Activated CD8-positive, alpha-beta T cell treated with anti-CD3 and anti-CD28 coated beads, Interleukin-2, amount 10 ng/mL, durations not matched to agents 7 days and 5 days (primary cell): ENCODE measurements at regions of chr1 and their contacts with region 1.

Region 1: DNA sequence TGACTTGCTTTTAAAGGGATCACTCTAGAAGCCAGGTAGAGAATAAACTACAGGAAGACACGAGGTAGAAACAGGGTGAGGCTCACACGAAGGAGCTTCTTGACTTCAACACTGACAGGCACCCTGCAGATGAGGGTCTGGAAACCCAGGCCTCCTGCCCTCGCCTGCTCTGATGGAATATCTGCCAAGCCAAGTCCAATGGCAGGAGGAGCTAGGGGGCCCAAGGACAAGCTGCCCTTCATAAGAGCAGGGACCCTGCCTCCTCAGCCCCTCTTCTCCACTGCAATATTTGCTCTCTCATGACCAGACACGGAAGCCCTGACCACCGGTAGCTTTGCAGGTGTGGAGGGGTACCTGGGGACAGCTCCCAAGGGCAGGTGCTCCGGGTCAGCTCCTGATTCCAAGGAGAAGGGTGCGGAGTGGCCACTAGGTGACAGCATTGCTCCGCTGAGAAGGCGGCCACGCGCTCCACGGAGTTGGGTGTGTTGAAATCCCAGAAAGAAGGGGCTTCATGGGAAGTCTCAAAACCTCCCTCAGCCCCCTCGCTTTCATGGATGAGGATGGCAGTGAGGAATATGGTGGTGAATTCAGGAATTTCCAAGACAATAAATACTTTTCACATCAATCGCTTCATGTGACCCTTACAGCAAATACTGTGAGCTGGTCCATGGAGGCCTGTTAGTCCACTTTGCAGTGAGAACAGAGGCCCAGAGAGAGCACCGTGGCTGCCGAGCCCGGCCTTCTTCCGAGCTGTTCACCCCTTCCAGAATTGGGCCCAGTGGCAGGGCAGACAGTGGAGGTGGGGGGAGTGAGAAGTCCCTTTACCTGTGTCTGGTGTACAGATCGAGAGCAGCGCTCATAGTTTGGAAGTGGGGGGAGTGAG is 33.2 kb upstream of the PAX7 start:
- DNase-seq: peak; percentile 58
- ATAC-seq: peak; percentile 65
- H3K4me3 Mint-ChIP-seq: no peak overlapping the region
- H3K27ac Mint-ChIP-seq: no peak overlapping the region
- H3K4me1 Mint-ChIP-seq: no peaks in the 10 kb centered on the region
- H3K27me3 Mint-ChIP-seq: peaks cover 17% of the 10 kb centered on the region

Region 2: GRCh38 chr1:18556364-18556763 is 41.0 kb before region 1 on chr1:
- CTCF ChIA-PET with region 1: no interaction called
- POLR2A ChIA-PET with region 1: no interaction called
- DNase-seq: no peak
- ATAC-seq: no peak
- H3K4me3 Mint-ChIP-seq: no peak overlapping the region
- H3K27ac Mint-ChIP-seq: no peak overlapping the region
- H3K4me1 Mint-ChIP-seq: peaks cover 7% of the 10 kb centered on the region
- H3K27me3 Mint-ChIP-seq: peaks cover 27% of the 10 kb centered on the region

Region 3: GRCh38 chr1:18581420-18581880 is 16.0 kb before region 1 on chr1:
- CTCF ChIA-PET with region 1: interaction called, 11 read pairs
- POLR2A ChIA-PET with region 1: no interaction called
- DNase-seq: peak; percentile 58
- ATAC-seq: peak; percentile 61
- H3K4me3 Mint-ChIP-seq: no peak overlapping the region
- H3K27ac Mint-ChIP-seq: no peak overlapping the region
- H3K4me1 Mint-ChIP-seq: no peaks in the 10 kb centered on the region
- H3K27me3 Mint-ChIP-seq: peaks cover 2% of the 10 kb centered on the region

Region 4: DNA sequence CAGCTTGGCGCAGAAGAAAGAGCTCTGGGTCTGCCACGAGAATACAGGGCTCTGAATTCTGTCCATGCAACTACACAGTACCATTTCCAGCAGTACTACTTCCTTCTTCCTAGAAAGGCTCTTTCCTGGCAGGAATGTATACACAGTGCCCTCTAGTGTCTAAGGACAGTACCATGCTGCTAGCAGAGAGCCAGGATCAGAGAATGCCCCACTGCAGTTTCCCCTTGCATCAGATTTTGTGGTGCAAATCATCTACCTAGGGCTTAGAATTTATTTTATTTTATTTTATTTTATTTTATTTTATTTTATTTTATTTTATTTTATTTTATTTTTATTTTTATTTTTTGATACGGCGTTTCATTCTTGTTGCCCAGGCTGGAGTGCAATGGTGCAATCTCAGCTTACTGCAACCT is 84.0 kb after region 1 on chr1:
- CTCF ChIA-PET with region 1: interaction called, 10 read pairs
- POLR2A ChIA-PET with region 1: no interaction called
- DNase-seq: peak; percentile 31
- ATAC-seq: no peak
- H3K4me3 Mint-ChIP-seq: no peak overlapping the region
- H3K27ac Mint-ChIP-seq: no peak overlapping the region
- H3K4me1 Mint-ChIP-seq: no peaks in the 10 kb centered on the region
- H3K27me3 Mint-ChIP-seq: peaks cover 2% of the 10 kb centered on the region

Region 5: GRCh38 chr1:18686540-18686939 is 89.1 kb after region 1 on chr1:
- CTCF ChIA-PET with region 1: interaction called, 10 read pairs
- POLR2A ChIA-PET with region 1: no interaction called
- DNase-seq: no peak
- ATAC-seq: no peak
- H3K4me3 Mint-ChIP-seq: no peak overlapping the region
- H3K27ac Mint-ChIP-seq: no peak overlapping the region
- H3K4me1 Mint-ChIP-seq: no peaks in the 10 kb centered on the region
- H3K27me3 Mint-ChIP-seq: peaks cover 2% of the 10 kb centered on the region

Region 6: DNA sequence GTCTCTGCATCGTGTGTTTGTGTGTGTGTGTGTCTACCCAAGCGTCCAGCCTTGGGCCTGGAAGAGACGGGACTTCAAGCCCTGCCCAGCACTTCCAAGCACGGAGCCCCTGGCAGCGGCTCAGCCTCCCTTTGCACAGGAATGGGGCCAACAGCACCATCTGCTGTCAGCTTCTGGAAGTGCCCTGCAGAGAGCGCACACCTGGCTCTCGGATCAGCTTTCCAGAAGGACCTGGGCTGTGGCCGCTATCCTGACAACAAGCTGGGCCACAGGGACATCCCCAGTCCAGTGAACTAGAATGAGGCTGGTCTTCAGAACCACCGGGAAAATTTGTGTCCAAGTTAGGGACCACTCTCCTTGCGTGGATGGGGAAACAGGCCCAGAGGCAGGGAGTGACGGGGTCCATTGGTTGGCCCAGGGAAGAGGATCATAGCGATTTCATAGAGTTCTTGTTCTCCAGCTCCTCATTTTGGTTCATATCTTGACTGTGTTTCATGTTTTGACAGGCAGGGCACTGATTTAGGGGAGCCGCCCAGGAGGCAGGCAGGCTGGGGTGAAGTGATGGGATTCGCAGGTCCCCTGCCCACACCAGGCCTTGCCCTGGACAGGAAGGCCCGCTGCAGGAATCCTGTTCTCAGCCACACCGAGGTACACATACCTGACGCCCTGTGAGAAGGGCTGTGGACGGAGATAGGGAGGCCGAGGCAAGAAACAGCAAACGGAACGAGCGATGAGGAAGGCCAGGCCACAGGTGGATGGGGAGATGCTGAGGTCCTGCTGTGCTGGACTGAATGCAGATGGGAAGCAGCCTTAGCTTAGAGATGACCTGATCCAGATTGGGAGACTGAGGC is 223.6 kb after region 1 on chr1:
- CTCF ChIA-PET with region 1: interaction called, 21 read pairs
- POLR2A ChIA-PET with region 1: no interaction called
- DNase-seq: peak; percentile 64
- ATAC-seq: peak; percentile 67
- H3K4me3 Mint-ChIP-seq: no peak overlapping the region
- H3K27ac Mint-ChIP-seq: no peak overlapping the region
- H3K4me1 Mint-ChIP-seq: no peaks in the 10 kb centered on the region
- H3K27me3 Mint-ChIP-seq: peaks cover 30% of the 10 kb centered on the region

Region 7: GRCh38 chr1:18875107-18875795 is 277.9 kb after region 1 on chr1:
- CTCF ChIA-PET with region 1: interaction called, 11 read pairs
- POLR2A ChIA-PET with region 1: no interaction called
- DNase-seq: peak; percentile 75
- ATAC-seq: peak; percentile 79
- H3K4me3 Mint-ChIP-seq: no peak overlapping the region
- H3K27ac Mint-ChIP-seq: no peak overlapping the region
- H3K4me1 Mint-ChIP-seq: no peaks in the 10 kb centered on the region
- H3K27me3 Mint-ChIP-seq: no peaks in the 10 kb centered on the region